Naive thymus-derived CD4-positive, alpha-beta T cell (primary cell): ENCODE measurements at regions of chr3 and their contacts with region 1.

Region 1: DNA sequence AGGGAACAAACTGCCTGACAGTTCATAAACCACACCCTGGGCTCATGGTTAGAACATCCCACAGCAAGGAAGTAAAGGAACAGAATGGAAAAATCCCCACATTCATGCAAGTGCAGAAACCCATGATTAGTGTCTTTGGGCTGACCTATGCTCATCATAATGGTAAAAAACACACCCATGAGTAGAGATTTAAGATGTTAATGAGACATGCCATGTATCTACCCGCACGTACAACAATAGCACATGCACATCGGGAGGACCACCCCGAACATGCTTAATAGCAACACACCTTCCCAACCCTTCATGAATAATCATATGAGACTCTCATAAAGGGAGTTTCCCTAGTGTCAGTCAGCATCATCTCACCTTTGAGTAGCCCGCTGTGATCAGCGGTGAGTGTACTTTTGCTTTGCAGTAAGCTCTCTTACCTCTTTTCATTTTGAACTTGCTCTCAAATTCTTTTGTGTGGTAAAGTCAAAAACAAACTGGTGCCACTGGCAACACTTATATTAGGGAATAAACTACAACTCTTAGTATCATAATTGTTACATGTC is 23.2 kb downstream of the ZBED2 start:
- DNase-seq: no peak
- ATAC-seq: peak; percentile 65
- H3K4me3 ChIP-seq: no peak overlapping the region
- H3K4me3 Mint-ChIP-seq: peak overlapping the region in 3 of 10 donors; percentile 4 to 16 (median 7)
- H3K27ac ChIP-seq: no peak overlapping the region
- H3K27ac Mint-ChIP-seq: peak overlapping the region in 7 of 9 donors; percentile 19 to 81 (median 48)
- H3K4me1 ChIP-seq: peaks cover 0 to 14% of the 10 kb centered on the region in 2 donors
- H3K4me1 Mint-ChIP-seq: peaks cover 23 to 72% (median 67%) of the 10 kb centered on the region in 7 donors
- H3K27me3 ChIP-seq: no peaks in the 10 kb centered on the region
- H3K27me3 Mint-ChIP-seq: no peaks in the 10 kb centered on the region

Region 2: DNA sequence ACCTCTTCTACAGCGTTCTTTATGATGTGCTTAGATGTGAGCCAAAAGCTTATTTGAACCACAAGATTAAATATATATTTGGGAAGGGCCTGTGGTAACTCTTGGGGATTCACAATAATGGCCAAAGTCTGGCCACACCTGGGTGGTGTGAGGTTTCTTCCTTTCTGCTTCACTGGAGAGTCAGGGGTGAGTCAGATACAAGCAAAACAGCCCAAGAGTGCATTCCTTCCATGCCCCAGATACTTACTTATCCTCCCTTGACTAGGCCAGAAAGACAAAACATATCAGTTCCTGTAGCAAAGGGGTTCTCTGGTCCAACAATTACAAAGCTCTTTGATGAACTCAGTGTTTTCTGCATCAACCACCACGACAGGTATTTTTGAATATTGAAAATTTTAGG is 22.2 kb after region 1 on chr3:
- CTCF ChIA-PET with region 1: no interaction called
- POLR2A ChIA-PET with region 1: no interaction called
- intact Hi-C with region 1: loop called in 1 of 2 experiments (anchors 2 kb)
- DNase-seq: no peak
- ATAC-seq: no peak
- H3K4me3 ChIP-seq: no peak overlapping the region
- H3K4me3 Mint-ChIP-seq: peak overlapping the region in 1 of 10 donors; percentile 83
- H3K27ac ChIP-seq: no peak overlapping the region
- H3K27ac Mint-ChIP-seq: peak overlapping the region in 8 of 9 donors; percentile 3 to 91 (median 20)
- H3K4me1 ChIP-seq: peaks cover 0 to 21% of the 10 kb centered on the region in 2 donors
- H3K4me1 Mint-ChIP-seq: peaks cover 11 to 84% (median 24%) of the 10 kb centered on the region in 7 donors
- H3K27me3 ChIP-seq: no peaks in the 10 kb centered on the region
- H3K27me3 Mint-ChIP-seq: no peaks in the 10 kb centered on the region